Breast epithelium (tissue), 4 donors: ENCODE measurements at regions of chr17 and their contacts with region 1.

Region 1: GRCh38 chr17:70089513-70090148 is 14.6 kb downstream of the KCNJ16 start:
- DNase-seq: no peak
- H3K4me3 ChIP-seq: no peak overlapping the region
- H3K27ac ChIP-seq: peak overlapping the region; percentile 34 to 64
- H3K4me1 ChIP-seq: no peaks in the 10 kb centered on the region
- H3K27me3 ChIP-seq: no peaks in the 10 kb centered on the region
- CTCF ChIP-seq: peak in 1 of 3 donors; percentile 12
- POLR2A ChIP-seq: no peak

Region 2: DNA sequence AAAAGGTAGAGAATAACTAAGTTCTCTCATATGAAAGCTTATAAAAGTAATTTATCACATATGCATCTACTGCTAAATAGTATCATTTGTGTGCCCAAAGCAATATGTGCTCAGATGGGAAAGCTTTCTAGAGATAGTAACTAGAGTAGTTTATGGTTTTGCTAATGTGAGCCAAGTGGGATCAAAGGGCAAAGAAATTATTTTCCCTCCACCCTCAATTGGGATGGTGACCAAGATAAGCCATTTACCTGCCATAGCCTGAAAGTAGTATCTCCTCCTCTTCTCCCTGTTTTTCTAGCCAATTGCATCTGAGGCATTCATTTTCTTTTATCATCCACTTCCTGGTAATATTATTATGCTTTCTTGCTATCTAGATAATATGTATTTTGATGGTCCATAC is 56.5 kb before region 1 on chr17:
- intact Hi-C with region 1: loop called (anchors 2 kb)
- DNase-seq: no peak
- H3K4me3 ChIP-seq: no peak overlapping the region
- H3K27ac ChIP-seq: no peak overlapping the region
- H3K4me1 ChIP-seq: no peaks in the 10 kb centered on the region
- H3K27me3 ChIP-seq: no peaks in the 10 kb centered on the region
- CTCF ChIP-seq: no peak
- POLR2A ChIP-seq: no peak

Region 3: GRCh38 chr17:70060415-70060814 is 29.2 kb before region 1 on chr17:
- intact Hi-C with region 1: no loop called
- DNase-seq: no peak
- H3K4me3 ChIP-seq: no peak overlapping the region
- H3K27ac ChIP-seq: no peak overlapping the region
- H3K4me1 ChIP-seq: no peaks in the 10 kb centered on the region
- H3K27me3 ChIP-seq: no peaks in the 10 kb centered on the region
- CTCF ChIP-seq: no peak
- POLR2A ChIP-seq: no peak

Region 4: GRCh38 chr17:70074956-70075355 is 14.7 kb before region 1 on chr17 and contains the start of gene KCNJ16:
- intact Hi-C with region 1: no loop called
- DNase-seq: no peak
- H3K4me3 ChIP-seq: no peak within 1 kb of the TSS
- H3K27ac ChIP-seq: no peak within 1 kb of the TSS
- H3K4me1 ChIP-seq: no peaks in the 10 kb centered on the region
- H3K27me3 ChIP-seq: no peaks in the 10 kb centered on the region
- CTCF ChIP-seq: no peak
- POLR2A ChIP-seq: no peak
- total RNA-seq, gene KCNJ16: 0.32 to 18.6 (median 1.3) TPM

Region 5: DNA sequence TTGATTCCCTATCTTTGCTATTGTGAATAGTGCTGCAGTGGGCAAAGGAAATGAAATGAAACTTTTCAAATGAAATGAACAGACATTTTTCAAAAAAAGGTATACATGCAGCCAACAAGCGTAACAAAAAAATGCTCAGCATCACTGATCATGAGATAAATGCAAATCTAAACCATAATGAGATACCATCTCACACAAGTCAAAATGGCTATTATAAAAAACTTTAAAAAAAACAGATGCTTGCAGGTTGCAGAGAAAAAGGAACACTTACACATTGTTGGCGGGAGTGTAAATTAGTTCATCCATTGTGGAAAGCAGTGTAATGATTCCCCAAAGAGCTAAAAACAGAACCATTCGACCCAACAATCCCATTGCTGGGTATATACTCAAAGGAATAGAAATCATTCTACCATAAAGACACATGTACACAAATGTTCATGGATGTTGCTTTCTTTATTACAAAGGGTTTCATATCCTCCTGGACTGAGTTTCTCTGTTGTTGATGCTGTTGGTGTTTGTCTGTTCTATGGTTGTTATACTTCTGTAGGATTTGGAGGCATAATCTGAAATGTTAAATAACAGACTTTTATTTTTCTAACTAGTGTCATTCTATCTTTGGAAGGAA is 1931.9 kb after region 1 on chr17:
- intact Hi-C with region 1: no loop called
- DNase-seq: no peak
- H3K4me3 ChIP-seq: no peak overlapping the region
- H3K27ac ChIP-seq: no peak overlapping the region
- H3K4me1 ChIP-seq: no peaks in the 10 kb centered on the region
- H3K27me3 ChIP-seq: no peaks in the 10 kb centered on the region
- CTCF ChIP-seq: no peak
- POLR2A ChIP-seq: no peak